Caco-2 (cell line): ENCODE measurements at regions of chr20 and their contacts with region 1.

Region 1: GRCh38 chr20:63520504-63520933 is at the start of gene PPDPF:
- DNase-seq: peak in 1 of 2 experiments; percentile 90
- H3K4me3 ChIP-seq: peak within 1 kb of the TSS; percentile 97
- H3K4me3 Mint-ChIP-seq: peak within 1 kb of the TSS; percentile 92
- H3K27ac Mint-ChIP-seq: peak within 1 kb of the TSS; percentile 95
- H3K4me1 ChIP-seq: peaks cover 14% of the 10 kb centered on the region
- H3K4me1 Mint-ChIP-seq: no peaks in the 10 kb centered on the region
- H3K27me3 ChIP-seq: no peaks in the 10 kb centered on the region
- H3K27me3 Mint-ChIP-seq: no peaks in the 10 kb centered on the region
- CTCF ChIP-seq: no peak
- total RNA-seq, gene PPDPF: 511 and 634 TPM in 2 replicates

Region 2: GRCh38 chr20:63272584-63273579 is 247.6 kb before region 1 on chr20 and contains the start of gene ARFGAP1:
- CTCF ChIA-PET with region 1: interaction called, 12 read pairs
- POLR2A ChIA-PET with region 1: interaction called, 4 read pairs
- intact Hi-C with region 1: no loop called
- DNase-seq: peak; percentile 96 to 98
- H3K4me3 ChIP-seq: peak within 1 kb of the TSS; percentile 97
- H3K4me3 Mint-ChIP-seq: peak within 1 kb of the TSS; percentile 81
- H3K27ac Mint-ChIP-seq: peak within 1 kb of the TSS; percentile 86
- H3K4me1 ChIP-seq: peaks cover 18% of the 10 kb centered on the region
- H3K4me1 Mint-ChIP-seq: peaks cover 23% of the 10 kb centered on the region
- H3K27me3 ChIP-seq: no peaks in the 10 kb centered on the region
- H3K27me3 Mint-ChIP-seq: no peaks in the 10 kb centered on the region
- CTCF ChIP-seq: no peak
- total RNA-seq, gene ARFGAP1: 275 and 286 TPM in 2 replicates

Region 3: DNA sequence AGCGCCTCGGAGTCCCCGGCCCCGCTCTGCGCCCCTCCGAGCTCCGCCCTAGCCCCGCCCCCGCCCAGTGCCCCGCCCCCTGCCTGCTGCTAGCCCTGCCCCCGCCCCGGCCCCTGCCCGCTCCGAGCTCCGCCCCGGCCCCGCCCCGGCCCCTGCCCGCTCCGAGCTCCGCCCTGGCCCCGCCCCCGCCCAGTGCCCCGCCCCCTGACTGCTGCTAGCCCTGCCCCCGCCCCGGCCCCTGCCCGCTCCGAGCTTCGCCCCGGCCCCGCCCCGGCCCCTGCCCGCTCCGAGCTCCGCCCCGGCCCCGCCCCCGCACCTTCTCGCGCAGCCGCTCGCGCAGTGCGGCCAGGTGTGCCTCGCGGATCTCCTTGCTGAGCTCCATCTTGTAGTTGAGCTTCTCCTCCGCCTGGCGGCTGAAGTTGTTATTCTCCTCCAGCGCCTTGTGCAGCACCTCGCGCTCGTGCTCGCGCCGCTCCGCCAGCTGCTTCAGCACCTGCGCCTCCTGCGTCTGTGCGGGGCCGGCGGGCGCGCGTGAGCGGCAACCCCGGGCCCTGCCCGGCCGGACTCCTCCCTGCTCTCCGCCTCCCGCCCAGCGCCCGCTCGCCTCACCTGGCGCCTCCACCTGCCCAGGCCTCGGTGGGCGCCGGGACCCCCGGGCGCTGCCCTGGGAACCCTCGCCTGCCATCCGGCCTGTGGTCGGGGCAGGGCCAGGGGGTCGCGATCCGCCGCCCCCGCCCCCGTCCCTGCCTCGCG is 121.4 kb after region 1 on chr20:
- CTCF ChIA-PET with region 1: interaction called, 6 read pairs
- POLR2A ChIA-PET with region 1: interaction called, 17 read pairs
- intact Hi-C with region 1: no loop called
- DNase-seq: peak; percentile 100
- H3K4me3 ChIP-seq: peak overlapping the region; percentile 73
- H3K4me3 Mint-ChIP-seq: peak overlapping the region; percentile 79
- H3K27ac Mint-ChIP-seq: peak overlapping the region; percentile 67
- H3K4me1 ChIP-seq: peaks cover 21% of the 10 kb centered on the region
- H3K4me1 Mint-ChIP-seq: peaks cover 8% of the 10 kb centered on the region
- H3K27me3 ChIP-seq: no peaks in the 10 kb centered on the region
- H3K27me3 Mint-ChIP-seq: no peaks in the 10 kb centered on the region
- CTCF ChIP-seq: peak; percentile 72 to 92

Region 4: DNA sequence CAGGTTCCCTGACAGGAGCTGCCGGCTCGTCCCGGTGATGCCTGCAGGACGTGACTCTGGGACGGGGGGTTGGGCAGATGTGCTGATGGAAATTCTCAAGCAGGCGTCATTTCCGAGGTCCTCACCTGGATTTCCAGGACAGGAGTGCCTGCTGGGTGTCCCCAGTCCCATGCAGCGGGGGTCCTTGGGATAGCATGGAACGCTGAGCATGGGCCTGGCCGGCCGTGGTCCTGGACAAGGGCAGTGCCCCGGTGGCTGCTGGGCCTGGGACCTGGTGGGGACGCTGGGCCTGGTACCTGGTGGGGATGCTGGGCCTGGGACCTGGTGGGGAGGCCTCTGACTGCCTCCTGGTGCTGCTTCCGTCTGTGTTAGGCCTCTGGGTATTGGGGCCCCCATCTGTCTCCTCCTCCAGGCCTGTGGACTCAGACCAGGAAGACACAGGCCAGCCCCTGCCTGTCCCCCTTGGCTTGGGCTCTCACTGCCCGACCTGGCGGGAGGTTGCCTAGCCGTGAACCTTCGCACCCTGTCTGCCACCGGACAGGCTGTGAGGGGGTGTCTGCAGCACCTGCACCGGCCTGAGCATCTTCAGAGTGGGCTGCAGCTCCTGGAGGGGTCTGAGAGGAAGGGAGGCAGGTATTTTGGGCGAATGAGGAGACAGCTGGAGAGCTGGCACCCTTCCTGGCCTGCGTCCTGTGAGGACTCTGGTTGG is 143.8 kb after region 1 on chr20:
- CTCF ChIA-PET with region 1: no interaction called
- POLR2A ChIA-PET with region 1: no interaction called
- intact Hi-C with region 1: no loop called
- DNase-seq: no peak
- H3K4me3 ChIP-seq: no peak overlapping the region
- H3K4me3 Mint-ChIP-seq: no peak overlapping the region
- H3K27ac Mint-ChIP-seq: no peak overlapping the region
- H3K4me1 ChIP-seq: peaks cover 3% of the 10 kb centered on the region
- H3K4me1 Mint-ChIP-seq: peaks cover 13% of the 10 kb centered on the region
- H3K27me3 ChIP-seq: no peaks in the 10 kb centered on the region
- H3K27me3 Mint-ChIP-seq: no peaks in the 10 kb centered on the region
- CTCF ChIP-seq: no peak

Region 5: GRCh38 chr20:63894358-63895201 is 374.1 kb after region 1 on chr20 and contains the start of gene DNAJC5:
- CTCF ChIA-PET with region 1: no interaction called
- POLR2A ChIA-PET with region 1: interaction called, 10 read pairs
- intact Hi-C with region 1: no loop called
- DNase-seq: peak; percentile 99 to 100
- H3K4me3 ChIP-seq: peak within 1 kb of the TSS; percentile 61
- H3K4me3 Mint-ChIP-seq: peak within 1 kb of the TSS; percentile 76
- H3K27ac Mint-ChIP-seq: peak within 1 kb of the TSS; percentile 85
- H3K4me1 ChIP-seq: peaks cover 27% of the 10 kb centered on the region
- H3K4me1 Mint-ChIP-seq: peaks cover 27% of the 10 kb centered on the region
- H3K27me3 ChIP-seq: no peaks in the 10 kb centered on the region
- H3K27me3 Mint-ChIP-seq: no peaks in the 10 kb centered on the region
- CTCF ChIP-seq: no peak
- total RNA-seq, gene DNAJC5: 117 and 124 TPM in 2 replicates

Region 6: DNA sequence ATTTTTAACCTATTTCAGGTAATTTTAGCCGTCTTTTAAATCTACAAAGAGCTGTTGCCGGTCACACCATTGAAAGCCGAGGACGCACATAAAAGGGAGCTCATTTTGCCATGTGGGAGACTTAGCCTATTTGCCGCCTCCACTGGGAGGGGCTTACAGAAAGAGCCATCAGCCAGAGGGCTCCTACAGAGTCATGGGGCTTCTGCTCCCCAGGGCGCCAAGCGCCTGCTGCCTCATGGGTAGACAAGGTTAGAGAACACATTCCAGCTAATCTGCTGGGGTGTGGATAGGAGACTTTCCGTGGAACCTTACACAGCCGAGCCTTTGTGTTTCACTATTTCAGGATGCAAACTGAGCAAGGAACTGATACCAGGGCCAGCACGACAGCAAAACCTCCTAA is 747.7 kb after region 1 on chr20:
- CTCF ChIA-PET with region 1: no interaction called
- POLR2A ChIA-PET with region 1: interaction called, 10 read pairs
- intact Hi-C with region 1: no loop called
- DNase-seq: no peak
- H3K4me3 ChIP-seq: no peak overlapping the region
- H3K4me3 Mint-ChIP-seq: no peak overlapping the region
- H3K27ac Mint-ChIP-seq: no peak overlapping the region
- H3K4me1 ChIP-seq: no peaks in the 10 kb centered on the region
- H3K4me1 Mint-ChIP-seq: no peaks in the 10 kb centered on the region
- H3K27me3 ChIP-seq: no peaks in the 10 kb centered on the region
- H3K27me3 Mint-ChIP-seq: no peaks in the 10 kb centered on the region
- CTCF ChIP-seq: no peak